HCT116 (cell line): ENCODE measurements at regions of chr1 and their contacts with region 1.

Region 1: GRCh38 chr1:221858818-221859611 is 117.1 kb upstream of the DUSP10 start:
- DNase-seq: no peak
- ATAC-seq: no peak
- H3K4me3 ChIP-seq: no peak overlapping the region
- H3K27ac ChIP-seq: no peak overlapping the region
- H3K4me1 ChIP-seq: no peaks in the 10 kb centered on the region
- H3K27me3 ChIP-seq: no peaks in the 10 kb centered on the region
- CTCF ChIP-seq: no peak
- POLR2A ChIP-seq: no peak
- RAD21 ChIP-seq: no peak

Region 2: GRCh38 chr1:221543529-221544120 is 315.4 kb before region 1 on chr1:
- CTCF ChIA-PET with region 1: no interaction called
- POLR2A ChIA-PET with region 1: no interaction called
- RAD21 ChIA-PET with region 1: no interaction called
- intact Hi-C with region 1: loop called (anchors 5 kb)
- DNase-seq: peak; percentile 2
- ATAC-seq: no peak; the same call in 1 of the 2 replicates
- H3K4me3 ChIP-seq: no peak overlapping the region
- H3K27ac ChIP-seq: no peak overlapping the region
- H3K4me1 ChIP-seq: no peaks in the 10 kb centered on the region
- H3K27me3 ChIP-seq: no peaks in the 10 kb centered on the region
- CTCF ChIP-seq: peak; percentile 41 to 60 (median 57); a peak in 5 of 6 replicates
- POLR2A ChIP-seq: no peak
- RAD21 ChIP-seq: peak; percentile 69